K562 (cell line): ENCODE measurements at regions of chr1 and their contacts with region 1.

Region 1: GRCh38 chr1:44819608-44820327 is 11.4 kb downstream of the BTBD19 start:
- DNase-seq: peak; percentile 90 to 97 (median 93)
- ATAC-seq: peak; percentile 96
- H3K4me3 ChIP-seq: peak overlapping the region; percentile 36
- H3K27ac ChIP-seq: peak overlapping the region; percentile 100
- H3K4me1 ChIP-seq: peaks cover 13 to 28% of the 10 kb centered on the region in 2 experiments
- H3K27me3 ChIP-seq: no peaks in the 10 kb centered on the region
- CTCF ChIP-seq: peak; percentile 26 to 49 (median 49); a peak in 4 of 6 replicates
- EP300 ChIP-seq: peak; percentile 73
- POLR2A ChIP-seq: peak; percentile 100
- RAD21 ChIP-seq: peak; percentile 41 to 53; a peak in 3 of 4 replicates

Region 2: GRCh38 chr1:44730741-44731512 is 88.8 kb before region 1 on chr1 and contains the start of gene RNU5D-1:
- CTCF ChIA-PET with region 1: interaction called, 4 read pairs
- POLR2A ChIA-PET with region 1: interaction called, 106 read pairs
- in situ Hi-C with region 1: loop called (anchors 5 kb)
- intact Hi-C with region 1: loop called (anchors 1 kb)
- DNase-seq: peak; percentile 87 to 99 (median 90)
- ATAC-seq: peak; percentile 87
- H3K4me3 ChIP-seq: 0 out of 2 replicates have a peak within 1 kb of the TSS, but pooled peaks have one; percentile 3
- H3K27ac ChIP-seq: peak within 1 kb of the TSS; percentile 100
- H3K4me1 ChIP-seq: peaks cover 11 to 16% of the 10 kb centered on the region in 2 experiments
- H3K27me3 ChIP-seq: no peaks in the 10 kb centered on the region
- CTCF ChIP-seq: peak; percentile 79 to 97 (median 93)
- EP300 ChIP-seq: peak; percentile 80
- POLR2A ChIP-seq: peak; percentile 100
- RAD21 ChIP-seq: peak; percentile 4 to 54
- polyA plus RNA-seq, gene RNU5D-1: not detected

Region 3: GRCh38 chr1:44792783-44793714 is 26.7 kb before region 1 on chr1:
- CTCF ChIA-PET with region 1: no interaction called
- POLR2A ChIA-PET with region 1: interaction called, 594 read pairs
- in situ Hi-C with region 1: no loop called
- intact Hi-C with region 1: no loop called
- DNase-seq: no peak
- ATAC-seq: no peak
- H3K4me3 ChIP-seq: no peak overlapping the region
- H3K27ac ChIP-seq: no peak overlapping the region
- H3K4me1 ChIP-seq: peaks cover 16 to 20% of the 10 kb centered on the region in 2 experiments; a peak in 4 of 5 replicates
- H3K27me3 ChIP-seq: no peaks in the 10 kb centered on the region
- CTCF ChIP-seq: no peak
- EP300 ChIP-seq: no peak
- POLR2A ChIP-seq: no peak
- RAD21 ChIP-seq: no peak

Region 4: DNA sequence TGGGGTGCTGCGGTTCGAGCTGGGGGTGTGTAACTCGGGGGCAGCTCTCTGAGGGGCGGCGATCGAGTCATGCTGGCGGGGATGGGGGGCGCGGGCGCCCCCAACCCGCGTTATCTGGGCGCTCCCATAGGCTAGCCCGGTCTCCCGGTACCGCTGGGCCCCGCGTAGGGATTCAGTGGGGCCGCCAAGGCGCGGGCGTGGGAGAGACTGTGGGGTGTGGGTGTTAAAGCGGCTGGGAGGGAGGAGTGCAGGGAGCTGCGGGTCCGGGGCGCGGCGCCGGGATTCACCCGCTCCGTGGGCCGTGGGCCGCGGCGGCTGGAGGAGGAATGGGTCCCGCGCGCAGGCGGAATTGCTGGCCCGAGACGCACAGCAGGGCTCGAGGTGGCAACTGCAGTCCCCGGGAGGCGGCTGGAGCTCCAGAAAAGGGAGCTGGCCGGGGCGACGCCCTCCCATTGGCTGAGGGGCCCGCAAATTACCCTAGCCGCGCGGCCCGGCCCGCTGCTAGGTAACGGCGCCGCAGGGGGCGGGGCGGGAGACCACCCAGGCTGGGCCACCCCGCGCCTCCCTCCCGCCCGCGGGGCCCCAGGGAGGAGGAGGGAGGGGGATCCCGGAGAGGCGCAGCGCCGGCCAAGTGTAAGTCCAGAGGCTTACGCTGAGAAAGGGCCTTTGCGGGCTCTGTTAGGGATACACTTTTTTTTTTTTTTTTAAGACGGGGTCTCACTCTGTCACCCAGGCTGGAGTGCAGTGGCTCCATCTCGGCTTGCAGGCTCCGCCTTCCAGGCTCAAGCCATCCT is 23.3 kb after region 1 on chr1 and contains the start of gene PTCH2:
- CTCF ChIA-PET with region 1: no interaction called
- POLR2A ChIA-PET with region 1: interaction called, 20 read pairs
- in situ Hi-C with region 1: no loop called
- intact Hi-C with region 1: no loop called
- DNase-seq: peak; percentile 83 to 95 (median 92)
- ATAC-seq: peak; percentile 93
- H3K4me3 ChIP-seq: peak within 1 kb of the TSS; percentile 56
- H3K27ac ChIP-seq: peak within 1 kb of the TSS; percentile 23; the same call in 1 of the 3 replicates
- H3K4me1 ChIP-seq: peaks cover 5 to 17% of the 10 kb centered on the region in 2 experiments; a peak in 3 of 5 replicates
- H3K27me3 ChIP-seq: no peaks in the 10 kb centered on the region
- CTCF ChIP-seq: no peak
- EP300 ChIP-seq: no peak
- POLR2A ChIP-seq: peak; percentile 58; the same call in 1 of the 2 replicates
- RAD21 ChIP-seq: no peak
- polyA plus RNA-seq, gene PTCH2: 0.15 to 0.25 TPM

Region 5: DNA sequence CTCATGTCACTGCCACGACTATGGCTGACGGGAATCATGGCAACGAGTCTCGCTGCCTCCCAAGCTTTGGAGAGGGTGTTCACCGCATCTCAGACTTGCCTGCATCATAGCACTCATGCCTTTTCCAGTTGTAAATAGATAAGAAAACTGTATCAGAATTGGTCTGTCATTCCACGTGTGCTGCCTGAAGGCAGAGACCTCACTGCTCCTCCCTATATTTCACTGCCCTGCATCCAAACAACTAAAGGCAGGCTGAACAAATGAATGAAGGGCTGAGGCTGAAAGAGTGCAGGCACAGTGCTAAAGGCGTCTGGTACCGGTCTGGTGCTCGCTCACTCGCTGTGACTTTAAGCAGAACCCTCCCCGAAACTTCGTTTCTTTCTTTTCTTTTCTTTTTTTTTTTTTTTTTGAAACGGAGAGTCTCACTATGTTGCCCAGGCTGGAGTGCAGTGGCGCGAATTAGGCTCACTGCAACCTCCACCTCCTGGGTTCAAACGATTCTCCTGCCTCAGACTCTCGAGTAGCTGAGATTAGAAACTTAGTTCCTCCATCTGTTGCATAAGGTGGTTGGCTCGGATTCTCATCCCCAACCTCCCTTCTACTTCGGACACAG is 166.1 kb after region 1 on chr1:
- CTCF ChIA-PET with region 1: no interaction called
- POLR2A ChIA-PET with region 1: interaction called, 17 read pairs
- in situ Hi-C with region 1: no loop called
- intact Hi-C with region 1: no loop called
- DNase-seq: peak in 3 of 4 experiments; percentile 31 to 57 (median 38)
- ATAC-seq: peak; percentile 35
- H3K4me3 ChIP-seq: peak overlapping the region; percentile 65
- H3K27ac ChIP-seq: peak overlapping the region; percentile 70
- H3K4me1 ChIP-seq: peaks cover 10 to 15% of the 10 kb centered on the region in 2 experiments; a peak in 4 of 5 replicates
- H3K27me3 ChIP-seq: no peaks in the 10 kb centered on the region
- CTCF ChIP-seq: no peak
- EP300 ChIP-seq: no peak
- POLR2A ChIP-seq: no peak
- RAD21 ChIP-seq: 0 out of 4 replicates have a peak, but pooled peaks of 1 of the 2 experiments have one; percentile 4

Region 6: GRCh38 chr1:45303582-45304310 is 484.0 kb after region 1 on chr1:
- CTCF ChIA-PET with region 1: no interaction called
- POLR2A ChIA-PET with region 1: interaction called, 16 read pairs
- in situ Hi-C with region 1: no loop called
- intact Hi-C with region 1: no loop called
- DNase-seq: peak; percentile 99
- ATAC-seq: peak; percentile 93
- H3K4me3 ChIP-seq: peak overlapping the region; percentile 52
- H3K27ac ChIP-seq: peak overlapping the region; percentile 88
- H3K4me1 ChIP-seq: peaks cover 24% of the 10 kb centered on the region in 2 experiments
- H3K27me3 ChIP-seq: no peaks in the 10 kb centered on the region
- CTCF ChIP-seq: peak; percentile 95 to 99 (median 95)
- EP300 ChIP-seq: peak; percentile 31; the same call in 1 of the 2 replicates
- POLR2A ChIP-seq: peak; percentile 97
- RAD21 ChIP-seq: peak; percentile 93 to 94

Region 7: DNA sequence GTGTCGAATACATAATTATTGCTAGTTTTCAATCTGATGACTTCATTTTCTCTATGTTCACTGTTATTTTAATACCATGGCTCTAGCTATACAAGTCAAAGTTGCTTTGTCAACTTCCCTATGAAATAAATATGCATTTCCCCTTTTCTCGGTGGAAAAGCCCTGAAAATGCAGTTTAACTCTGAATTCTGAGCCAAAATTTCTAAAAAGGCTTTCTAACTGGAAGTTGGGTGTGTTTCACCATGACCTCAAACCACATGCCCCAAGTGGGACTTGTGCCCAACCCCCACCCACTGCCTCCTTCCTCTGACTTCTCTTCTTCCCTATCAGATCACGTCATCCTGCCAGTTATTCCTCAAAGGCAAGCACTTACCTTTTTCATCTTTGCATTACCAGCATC is 1775.4 kb after region 1 on chr1:
- CTCF ChIA-PET with region 1: no interaction called
- POLR2A ChIA-PET with region 1: no interaction called
- in situ Hi-C with region 1: no loop called
- intact Hi-C with region 1: no loop called
- DNase-seq: peak; percentile 45 to 58 (median 51)
- ATAC-seq: peak; percentile 56
- H3K4me3 ChIP-seq: no peak overlapping the region
- H3K27ac ChIP-seq: peak overlapping the region; percentile 23; the same call in 2 of the 3 replicates
- H3K4me1 ChIP-seq: peaks cover 11 to 21% of the 10 kb centered on the region in 2 experiments; a peak in 4 of 5 replicates
- H3K27me3 ChIP-seq: no peaks in the 10 kb centered on the region
- CTCF ChIP-seq: no peak
- EP300 ChIP-seq: no peak
- POLR2A ChIP-seq: no peak
- RAD21 ChIP-seq: no peak